ENCODE measurements at regions of chr1 and their contacts with region 1.

Region 1: GRCh38 chr1:203304919-203305808 is at the start of gene BTG2:
- DNase-seq: peak; percentile 87
- H3K4me3 Mint-ChIP-seq: peak within 1 kb of the TSS; percentile 68
- H3K27ac Mint-ChIP-seq: peak within 1 kb of the TSS; percentile 66
- H3K4me1 Mint-ChIP-seq: peaks cover 31% of the 10 kb centered on the region
- H3K27me3 Mint-ChIP-seq: peaks cover 59% of the 10 kb centered on the region
- CTCF ChIP-seq: no peak
- total RNA-seq, gene BTG2: 2.7 and 4.9 TPM in 2 replicates

Region 2: GRCh38 chr1:203326830-203327683 is 21.9 kb after region 1 on chr1:
- CTCF ChIA-PET with region 1: interaction called, 12 read pairs
- intact Hi-C with region 1: no loop called
- DNase-seq: peak; percentile 96
- H3K4me3 Mint-ChIP-seq: peak overlapping the region; percentile 71
- H3K27ac Mint-ChIP-seq: peak overlapping the region; percentile 70
- H3K4me1 Mint-ChIP-seq: peaks cover 21% of the 10 kb centered on the region
- H3K27me3 Mint-ChIP-seq: peaks cover 54% of the 10 kb centered on the region
- CTCF ChIP-seq: no peak

Region 3: DNA sequence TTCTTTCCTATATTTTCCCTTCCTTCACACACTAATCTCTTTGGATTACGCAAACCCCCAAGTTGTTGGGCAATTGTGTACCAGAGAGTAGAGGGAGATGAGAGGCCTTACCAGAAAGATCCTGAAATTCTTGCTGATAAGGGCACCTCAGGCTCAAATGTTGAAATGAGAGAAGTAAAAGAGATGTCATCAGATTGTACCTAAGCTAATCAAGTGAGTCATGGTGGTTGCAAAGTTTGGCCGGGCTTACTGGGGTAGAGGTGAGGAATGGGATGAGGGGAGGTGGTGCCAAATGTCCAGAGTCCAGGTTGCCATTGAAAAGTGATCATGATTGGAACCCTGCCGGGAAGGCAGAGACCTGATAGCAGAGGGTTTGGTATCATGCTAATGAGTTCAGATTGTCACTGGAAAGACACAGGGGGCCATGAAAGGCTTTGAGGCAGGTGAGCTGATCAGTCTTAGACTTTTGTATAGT is 231.9 kb after region 1 on chr1:
- CTCF ChIA-PET with region 1: no interaction called
- intact Hi-C with region 1: no loop called
- DNase-seq: peak; percentile 53
- H3K4me3 Mint-ChIP-seq: no peak overlapping the region
- H3K27ac Mint-ChIP-seq: peak overlapping the region; percentile 13
- H3K4me1 Mint-ChIP-seq: peaks cover 24% of the 10 kb centered on the region
- H3K27me3 Mint-ChIP-seq: peaks cover 9% of the 10 kb centered on the region
- CTCF ChIP-seq: no peak

Measured in Calu3 (cell line).